Activated CD4-positive, alpha-beta memory T cell treated with anti-CD3 and anti-CD28 coated beads for 36 hours (primary cell): ENCODE measurements at regions of chr9 and their contacts with region 1.

Region 1: DNA sequence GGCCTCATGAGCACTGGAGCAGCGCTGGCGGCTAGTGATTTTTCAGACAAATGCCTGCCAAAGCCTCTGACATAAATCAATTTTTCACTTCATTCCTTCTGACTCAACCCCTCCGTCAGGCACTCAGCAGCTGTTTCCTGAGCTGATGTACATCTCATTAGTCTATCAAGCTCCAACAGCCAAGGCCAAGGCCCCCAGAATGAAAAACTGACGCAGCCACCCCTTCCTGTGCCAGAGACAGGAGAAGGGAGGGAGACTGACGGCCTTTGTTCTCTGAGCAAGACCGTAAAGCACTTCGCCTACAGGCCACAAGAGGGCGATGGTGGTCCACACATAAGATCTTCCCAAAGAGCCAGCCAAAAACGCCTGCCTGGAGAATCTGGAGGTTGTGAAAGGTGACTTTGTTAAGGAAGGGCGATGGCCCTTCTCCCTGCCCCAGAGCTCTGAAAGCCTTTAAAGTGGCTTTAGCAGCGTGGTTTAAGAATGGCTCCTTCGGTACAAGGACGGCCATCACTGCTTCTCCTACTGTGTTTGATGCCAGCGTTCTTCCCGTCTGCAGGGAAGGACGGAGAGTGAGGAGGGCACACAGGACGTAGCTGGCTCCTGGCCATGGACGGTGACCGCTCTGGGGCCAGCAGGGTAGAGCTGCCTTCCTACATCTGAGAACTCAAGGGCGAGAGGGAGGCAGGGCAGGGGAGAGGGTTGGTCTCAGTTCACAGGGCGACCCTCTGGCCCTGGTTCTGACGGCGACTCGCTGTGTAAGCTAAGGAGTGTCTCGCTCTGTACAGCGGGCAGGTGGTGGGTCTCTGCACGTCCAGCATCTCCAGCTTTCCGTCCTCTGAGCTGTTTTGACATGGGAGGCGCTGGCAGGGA is 37.0 kb downstream of the ALG2 start:
- DNase-seq: peak; percentile 86
- H3K4me3 Mint-ChIP-seq: no peak overlapping the region
- H3K27ac Mint-ChIP-seq: no peak overlapping the region
- H3K4me1 Mint-ChIP-seq: peaks cover 33% of the 10 kb centered on the region
- H3K27me3 Mint-ChIP-seq: no peaks in the 10 kb centered on the region

Region 2: GRCh38 chr9:99030092-99030511 is 154.6 kb before region 1 on chr9:
- CTCF ChIA-PET with region 1: no interaction called
- POLR2A ChIA-PET with region 1: no interaction called
- intact Hi-C with region 1: no loop called
- DNase-seq: no peak
- H3K4me3 Mint-ChIP-seq: no peak overlapping the region
- H3K27ac Mint-ChIP-seq: no peak overlapping the region
- H3K4me1 Mint-ChIP-seq: peaks cover 20% of the 10 kb centered on the region
- H3K27me3 Mint-ChIP-seq: no peaks in the 10 kb centered on the region

Region 3: GRCh38 chr9:99173570-99174504 is 10.9 kb before region 1 on chr9:
- CTCF ChIA-PET with region 1: interaction called, 20 read pairs
- POLR2A ChIA-PET with region 1: no interaction called
- intact Hi-C with region 1: no loop called
- DNase-seq: no peak
- H3K4me3 Mint-ChIP-seq: no peak overlapping the region
- H3K27ac Mint-ChIP-seq: no peak overlapping the region
- H3K4me1 Mint-ChIP-seq: peaks cover 8% of the 10 kb centered on the region
- H3K27me3 Mint-ChIP-seq: peaks cover 8% of the 10 kb centered on the region

Region 4: DNA sequence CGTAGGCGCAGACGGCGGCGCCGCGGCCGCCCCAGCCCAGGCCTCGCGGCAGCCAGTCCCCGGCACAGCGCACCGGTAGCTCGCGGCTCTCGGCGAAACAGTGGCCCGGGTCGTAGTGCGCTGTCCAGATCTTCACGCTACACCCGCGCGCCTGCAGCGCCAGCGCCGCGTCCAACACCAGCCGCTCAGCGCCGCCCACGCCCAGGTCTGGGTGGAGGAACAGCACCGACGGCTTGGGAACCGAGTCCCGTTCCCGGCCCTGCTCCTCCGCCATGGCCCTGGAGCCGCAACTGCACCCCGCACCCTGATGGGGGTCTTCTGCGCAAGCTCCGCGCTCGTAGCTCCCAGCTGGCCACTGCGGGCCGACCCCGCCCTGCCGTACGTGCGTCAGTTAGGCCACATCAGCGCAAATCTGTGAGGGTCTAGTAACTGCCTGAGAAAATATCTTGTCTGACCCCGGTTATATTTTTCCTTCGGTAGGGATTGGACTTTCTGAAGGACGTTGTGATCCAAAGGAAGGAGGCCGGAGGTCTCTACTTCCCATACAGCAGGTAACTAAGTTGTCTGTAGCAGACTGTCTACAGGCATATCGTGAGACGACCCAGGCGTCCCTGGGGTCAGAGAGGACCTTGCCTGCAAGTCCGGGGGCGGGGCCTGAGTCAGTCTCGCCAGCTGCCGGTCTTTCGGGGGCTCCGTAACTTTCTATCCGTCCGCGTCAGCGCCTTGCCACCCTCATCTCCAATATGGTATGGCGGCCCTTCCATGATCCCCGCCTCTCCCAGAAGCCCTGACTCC is 37.1 kb after region 1 on chr9 and contains the starts of genes ALG2 and SEC61B:
- CTCF ChIA-PET with region 1: interaction called, 16 read pairs
- POLR2A ChIA-PET with region 1: interaction called, 3 read pairs
- intact Hi-C with region 1: loop called (anchors 2 kb)
- DNase-seq: peak; percentile 94
- H3K4me3 Mint-ChIP-seq: peak within 1 kb of the TSS; percentile 97
- H3K27ac Mint-ChIP-seq: peak within 1 kb of the TSS; percentile 95
- H3K4me1 Mint-ChIP-seq: peaks cover 66% of the 10 kb centered on the region
- H3K27me3 Mint-ChIP-seq: no peaks in the 10 kb centered on the region
- total RNA-seq, gene ALG2: 18.6 to 20.8 TPM
- total RNA-seq, gene SEC61B: 161 to 166 TPM

Region 5: DNA sequence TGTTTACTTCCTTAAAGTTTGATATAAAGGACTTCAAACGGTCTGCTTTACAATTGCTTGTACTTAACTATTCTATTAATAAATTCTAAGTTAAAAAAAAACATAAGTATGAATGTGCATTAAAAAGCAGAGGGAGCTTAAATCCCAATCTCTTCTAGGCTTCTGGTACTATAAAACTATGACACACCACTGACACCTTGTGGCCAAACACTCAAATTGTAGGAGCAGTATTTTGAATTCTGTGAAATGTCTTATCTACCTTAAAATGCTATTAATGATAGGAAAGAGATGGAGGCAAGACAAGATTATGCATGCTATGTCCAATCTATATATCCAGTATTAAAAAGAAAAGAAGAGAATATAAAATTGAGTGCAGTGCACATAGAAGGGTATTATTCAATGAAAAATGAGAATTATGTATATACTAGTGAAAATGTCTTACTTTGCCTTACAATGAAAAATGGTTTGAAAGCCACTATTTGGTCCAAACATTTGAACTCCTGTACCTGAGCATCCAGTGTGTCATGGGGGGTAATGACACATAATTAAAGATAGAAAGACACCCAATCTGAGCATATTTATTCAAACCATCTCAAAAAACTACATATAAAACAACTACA is 826.5 kb after region 1 on chr9:
- CTCF ChIA-PET with region 1: interaction called, 15 read pairs
- POLR2A ChIA-PET with region 1: no interaction called
- intact Hi-C with region 1: loop called (anchors 5 kb)
- DNase-seq: peak; percentile 20
- H3K4me3 Mint-ChIP-seq: no peak overlapping the region
- H3K27ac Mint-ChIP-seq: no peak overlapping the region
- H3K4me1 Mint-ChIP-seq: no peaks in the 10 kb centered on the region
- H3K27me3 Mint-ChIP-seq: no peaks in the 10 kb centered on the region

Region 6: GRCh38 chr9:100322954-100323536 is 1138.3 kb after region 1 on chr9:
- CTCF ChIA-PET with region 1: interaction called, 5 read pairs
- POLR2A ChIA-PET with region 1: no interaction called
- intact Hi-C with region 1: loop called (anchors 10 kb)
- DNase-seq: peak; percentile 24
- H3K4me3 Mint-ChIP-seq: no peak overlapping the region
- H3K27ac Mint-ChIP-seq: no peak overlapping the region
- H3K4me1 Mint-ChIP-seq: peaks cover 10% of the 10 kb centered on the region
- H3K27me3 Mint-ChIP-seq: no peaks in the 10 kb centered on the region